Activated B cell treated with CpG ODN at 0.5 μM for 24 hours (primary cell): ENCODE measurements at regions of chr5 and their contacts with region 1.

Region 1: GRCh38 chr5:54229041-54229780 is 81.2 kb downstream of the ARL15 start:
- DNase-seq: peak; percentile 47
- ATAC-seq: peak; percentile 89
- H3K4me3 Mint-ChIP-seq: peak overlapping the region; percentile 1
- H3K27ac Mint-ChIP-seq: no peak overlapping the region
- H3K4me1 Mint-ChIP-seq: peaks cover 31% of the 10 kb centered on the region
- H3K27me3 Mint-ChIP-seq: no peaks in the 10 kb centered on the region
- CTCF ChIP-seq: no peak

Region 2: GRCh38 chr5:53262348-53262970 is 966.8 kb before region 1 on chr5:
- CTCF ChIA-PET with region 1: no interaction called
- POLR2A ChIA-PET with region 1: no interaction called
- intact Hi-C with region 1: loop called (anchors 2 kb)
- DNase-seq: no peak
- ATAC-seq: no peak
- H3K4me3 Mint-ChIP-seq: no peak overlapping the region
- H3K27ac Mint-ChIP-seq: no peak overlapping the region
- H3K4me1 Mint-ChIP-seq: no peaks in the 10 kb centered on the region
- H3K27me3 Mint-ChIP-seq: no peaks in the 10 kb centered on the region
- CTCF ChIP-seq: no peak

Region 3: GRCh38 chr5:53481887-53482716 is 747.1 kb before region 1 on chr5:
- CTCF ChIA-PET with region 1: interaction called, 8 read pairs
- POLR2A ChIA-PET with region 1: no interaction called
- intact Hi-C with region 1: loop called (anchors 1 kb)
- DNase-seq: peak; percentile 40
- ATAC-seq: peak; percentile 62
- H3K4me3 Mint-ChIP-seq: peak overlapping the region; percentile 84
- H3K27ac Mint-ChIP-seq: no peak overlapping the region
- H3K4me1 Mint-ChIP-seq: peaks cover 39% of the 10 kb centered on the region
- H3K27me3 Mint-ChIP-seq: peaks cover 44% of the 10 kb centered on the region
- CTCF ChIP-seq: peak; percentile 24

Region 4: DNA sequence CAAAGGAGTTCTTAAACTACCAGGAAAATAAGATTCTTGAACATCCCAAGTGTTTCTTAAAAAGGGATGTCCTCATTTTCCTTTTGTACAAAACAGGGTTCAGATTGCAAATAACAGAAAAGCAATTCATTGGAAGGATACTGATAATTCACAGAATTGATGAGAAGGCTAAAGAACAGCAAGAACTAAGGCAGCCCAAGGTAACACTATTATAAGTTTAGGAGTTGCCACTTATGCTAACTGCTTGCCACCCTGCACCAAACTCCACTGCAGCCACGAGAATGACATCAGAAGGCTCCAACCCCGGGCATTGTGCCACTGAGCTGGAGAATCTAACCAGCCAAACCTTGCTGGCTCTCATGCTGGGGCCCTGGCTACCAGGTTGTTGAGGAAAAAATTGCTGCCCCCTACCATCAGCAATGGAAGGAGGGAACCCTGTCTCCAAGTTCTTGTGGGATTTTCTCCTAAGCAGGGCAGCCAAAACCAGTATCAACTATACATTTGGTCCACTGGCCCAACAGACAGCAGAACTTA is 42.2 kb before region 1 on chr5:
- CTCF ChIA-PET with region 1: no interaction called
- POLR2A ChIA-PET with region 1: no interaction called
- intact Hi-C with region 1: no loop called
- DNase-seq: no peak
- ATAC-seq: no peak
- H3K4me3 Mint-ChIP-seq: no peak overlapping the region
- H3K27ac Mint-ChIP-seq: no peak overlapping the region
- H3K4me1 Mint-ChIP-seq: peaks cover 19% of the 10 kb centered on the region
- H3K27me3 Mint-ChIP-seq: no peaks in the 10 kb centered on the region
- CTCF ChIP-seq: no peak

Region 5: DNA sequence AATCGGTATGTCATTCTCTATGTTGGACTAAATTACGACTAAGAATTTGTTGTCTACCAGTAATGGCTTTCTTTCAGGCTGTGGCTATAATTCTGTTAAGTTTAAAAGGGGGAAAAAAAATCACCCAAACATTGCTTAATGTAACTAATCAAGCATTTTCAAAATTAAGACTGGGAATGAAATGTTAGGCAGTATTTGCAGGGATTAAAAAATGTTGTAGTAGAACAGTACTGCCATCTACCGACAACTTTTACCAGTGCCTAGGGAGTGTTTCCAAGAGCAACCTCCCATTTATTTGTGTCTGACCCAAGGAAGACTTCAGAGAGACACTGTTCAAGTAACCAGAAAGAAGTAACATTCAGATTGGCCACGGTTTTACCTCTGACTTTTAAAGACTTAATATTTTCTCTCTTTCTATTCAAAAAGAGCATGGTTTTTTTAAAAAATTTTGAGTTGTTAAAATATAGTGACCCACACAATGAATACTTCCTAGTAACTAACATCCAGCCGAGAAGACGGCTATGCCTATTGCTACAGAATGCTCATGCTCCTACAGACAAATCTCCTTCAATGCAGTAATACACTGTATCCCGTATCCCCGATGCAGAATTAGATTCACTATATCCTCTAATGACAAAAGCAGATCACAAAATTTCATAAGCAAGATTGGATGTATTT is 11.2 kb before region 1 on chr5:
- CTCF ChIA-PET with region 1: interaction called, 14 read pairs
- POLR2A ChIA-PET with region 1: no interaction called
- intact Hi-C with region 1: no loop called
- DNase-seq: no peak
- ATAC-seq: no peak
- H3K4me3 Mint-ChIP-seq: no peak overlapping the region
- H3K27ac Mint-ChIP-seq: no peak overlapping the region
- H3K4me1 Mint-ChIP-seq: peaks cover 3% of the 10 kb centered on the region
- H3K27me3 Mint-ChIP-seq: no peaks in the 10 kb centered on the region
- CTCF ChIP-seq: peak; percentile 25